HAP-1 (cell line): ENCODE measurements at regions of chr21 and their contacts with region 1.

Region 1: GRCh38 chr21:10641107-10641506 is 119.7 kb downstream of the TPTE start:
- DNase-seq: no peak
- H3K4me3 ChIP-seq: no peak overlapping the region
- H3K4me1 ChIP-seq: no peaks in the 10 kb centered on the region
- H3K27me3 ChIP-seq: no peaks in the 10 kb centered on the region

Region 2: DNA sequence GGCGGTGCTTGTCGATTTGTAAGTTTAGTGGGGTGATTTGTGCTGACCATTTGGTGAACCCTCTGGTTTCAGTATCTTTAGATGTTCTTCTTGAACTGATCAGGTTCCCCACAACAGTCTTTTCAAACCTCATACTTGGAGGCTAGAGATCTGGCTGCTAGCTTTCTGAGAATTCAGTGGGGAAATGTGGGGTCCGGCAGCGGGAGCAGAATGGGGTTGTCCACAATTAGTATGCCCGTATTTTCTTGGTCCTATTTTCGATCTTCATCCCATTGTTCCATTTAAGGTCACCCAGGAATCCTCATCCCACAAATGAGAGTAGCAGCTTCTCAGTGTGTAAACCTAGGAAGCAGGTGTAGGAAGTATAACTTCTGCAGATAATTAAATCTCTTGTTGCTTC is 130.0 kb before region 1 on chr21:
- in situ Hi-C with region 1: no loop called
- DNase-seq: no peak
- H3K4me3 ChIP-seq: no peak overlapping the region
- H3K4me1 ChIP-seq: no peaks in the 10 kb centered on the region
- H3K27me3 ChIP-seq: no peaks in the 10 kb centered on the region

Region 3: DNA sequence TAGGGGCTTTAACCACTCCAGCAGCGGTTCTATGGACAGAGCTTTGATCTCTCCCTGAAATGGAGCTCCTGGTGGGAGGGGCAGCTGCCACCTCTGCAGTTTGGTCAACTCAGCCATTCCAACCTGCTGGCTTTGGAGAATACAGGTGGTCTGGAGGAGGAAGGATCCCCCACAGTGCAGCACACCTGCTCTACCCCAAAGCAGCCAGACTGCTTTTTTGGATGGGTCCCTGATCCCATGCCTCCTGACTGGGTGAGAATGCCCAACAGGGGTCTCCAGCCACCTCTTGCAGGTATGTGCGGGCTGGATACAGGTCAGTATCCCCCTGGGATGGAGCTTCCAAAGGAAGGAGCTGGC is 65.8 kb before region 1 on chr21:
- in situ Hi-C with region 1: loop called (anchors 10 kb)
- DNase-seq: no peak
- H3K4me3 ChIP-seq: no peak overlapping the region
- H3K4me1 ChIP-seq: no peaks in the 10 kb centered on the region
- H3K27me3 ChIP-seq: no peaks in the 10 kb centered on the region